ENCODE measurements at regions of chr9 and their contacts with region 1.

Region 1: GRCh38 chr9:19230356-19231125 is at the start of gene DENND4C:
- DNase-seq: peak; percentile 57 to 91 (median 83)
- ATAC-seq: peak; percentile 85
- H3K4me3 ChIP-seq: peak within 1 kb of the TSS; percentile 85 to 96
- H3K4me3 Mint-ChIP-seq: no peak within 1 kb of the TSS
- H3K27ac ChIP-seq: peak within 1 kb of the TSS; percentile 80 to 82
- H3K27ac Mint-ChIP-seq: peak within 1 kb of the TSS; percentile 90
- H3K4me1 ChIP-seq: peaks cover 23% of the 10 kb centered on the region
- H3K4me1 Mint-ChIP-seq: peaks cover 22% of the 10 kb centered on the region
- H3K27me3 ChIP-seq: no peaks in the 10 kb centered on the region
- H3K27me3 Mint-ChIP-seq: no peaks in the 10 kb centered on the region
- CTCF ChIP-seq: no peak
- total RNA-seq, gene DENND4C: 27.4 to 29.8 TPM

Region 2: DNA sequence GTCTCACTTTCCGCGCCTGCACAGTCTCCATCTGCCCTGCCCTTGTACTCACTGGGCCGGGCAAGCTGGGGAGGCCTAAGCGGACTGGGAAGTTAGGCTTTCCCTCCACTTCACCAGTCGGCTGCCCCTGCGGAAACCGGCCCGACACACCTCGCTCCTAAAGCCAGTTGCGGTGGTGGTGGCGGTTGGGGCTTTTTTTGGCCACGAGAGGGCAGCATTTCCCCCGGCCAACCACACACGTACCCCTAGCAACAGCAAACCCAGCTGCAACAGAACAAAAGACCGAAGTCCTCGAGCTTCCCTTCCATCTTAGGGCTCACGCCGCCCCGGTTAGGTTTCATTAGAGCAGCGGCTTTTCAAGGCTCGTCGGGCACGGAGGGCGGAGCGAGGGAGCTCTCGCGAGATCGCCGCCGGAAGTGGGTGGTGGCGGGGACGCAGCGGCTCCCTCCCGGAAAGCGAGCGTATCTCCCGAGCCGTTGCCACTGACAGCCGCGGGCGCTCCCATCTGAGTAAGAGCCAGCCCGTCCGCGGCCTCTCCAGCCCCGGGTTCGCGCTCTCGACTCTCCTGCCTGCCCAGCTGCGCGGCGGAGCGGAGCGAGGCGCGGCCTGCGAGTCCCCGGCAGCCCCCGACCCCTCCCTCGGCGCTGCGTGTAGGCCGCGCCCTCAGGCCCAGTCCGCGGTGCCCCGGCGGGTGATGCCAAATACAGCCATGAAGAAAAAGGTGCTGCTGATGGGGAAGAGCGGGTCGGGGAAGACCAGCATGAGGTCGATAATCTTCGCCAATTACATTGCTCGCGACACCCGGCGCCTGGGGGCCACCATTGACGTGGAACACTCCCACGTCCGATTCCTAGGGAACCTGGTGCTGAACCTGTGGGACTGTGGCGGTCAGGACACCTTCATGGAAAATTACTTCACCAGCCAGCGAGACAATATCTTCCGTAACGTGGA is 181.3 kb before region 1 on chr9 and contains the start of gene RRAGA:
- CTCF ChIA-PET with region 1: interaction called, 6 read pairs
- POLR2A ChIA-PET with region 1: interaction called, 5 read pairs
- intact Hi-C with region 1: loop called (anchors 1 kb)
- DNase-seq: peak; percentile 88 to 97 (median 93)
- ATAC-seq: peak; percentile 88
- H3K4me3 ChIP-seq: peak within 1 kb of the TSS; percentile 69 to 89
- H3K4me3 Mint-ChIP-seq: peak within 1 kb of the TSS; percentile 95
- H3K27ac ChIP-seq: peak within 1 kb of the TSS; percentile 80 to 96
- H3K27ac Mint-ChIP-seq: peak within 1 kb of the TSS; percentile 97
- H3K4me1 ChIP-seq: peaks cover 19% of the 10 kb centered on the region
- H3K4me1 Mint-ChIP-seq: peaks cover 40% of the 10 kb centered on the region
- H3K27me3 ChIP-seq: no peaks in the 10 kb centered on the region
- H3K27me3 Mint-ChIP-seq: no peaks in the 10 kb centered on the region
- CTCF ChIP-seq: peak; percentile 56
- total RNA-seq, gene RRAGA: 36.0 to 38.0 TPM

Region 3: DNA sequence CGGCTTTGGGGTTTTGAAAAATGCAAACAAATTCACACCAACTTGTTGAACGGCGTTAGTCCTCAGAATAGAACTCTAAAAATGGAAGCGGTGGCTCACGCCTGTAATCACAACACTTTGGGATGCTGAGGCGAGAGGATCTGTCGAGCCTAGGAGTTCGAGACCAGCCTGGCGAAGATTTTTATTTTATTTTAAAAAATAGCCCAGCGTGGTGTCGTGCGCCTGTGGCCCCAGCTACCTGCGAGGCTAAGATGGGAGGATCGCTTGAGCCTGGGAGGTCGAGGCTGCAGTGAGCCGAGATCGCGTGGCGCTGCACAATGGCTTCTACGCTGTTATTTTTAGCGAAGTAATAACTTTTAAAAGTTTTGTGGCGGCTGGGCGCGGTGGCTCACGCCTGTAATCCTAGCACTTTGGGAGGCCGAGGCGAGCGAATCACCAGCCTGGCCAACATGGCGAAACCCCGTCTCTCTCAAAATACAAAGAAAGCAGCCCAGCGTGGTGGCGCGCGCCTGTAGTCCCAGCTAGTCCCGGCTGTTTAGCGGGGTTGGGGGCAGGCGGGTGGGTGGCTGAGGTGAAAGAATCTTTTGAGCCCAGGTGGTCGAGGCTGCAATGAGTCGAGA is 102.5 kb before region 1 on chr9:
- CTCF ChIA-PET with region 1: interaction called, 3 read pairs
- POLR2A ChIA-PET with region 1: no interaction called
- intact Hi-C with region 1: loop called in 1 of 2 experiments (anchors 2 kb)
- DNase-seq: peak in 7 of 9 experiments; percentile 7 to 68 (median 46)
- ATAC-seq: peak; percentile 19
- H3K4me3 ChIP-seq: peak overlapping the region; percentile 62 to 70
- H3K4me3 Mint-ChIP-seq: peak overlapping the region; percentile 93
- H3K27ac ChIP-seq: peak overlapping the region; percentile 83 to 91
- H3K27ac Mint-ChIP-seq: peak overlapping the region; percentile 94
- H3K4me1 ChIP-seq: peaks cover 48% of the 10 kb centered on the region
- H3K4me1 Mint-ChIP-seq: peaks cover 53% of the 10 kb centered on the region
- H3K27me3 ChIP-seq: no peaks in the 10 kb centered on the region
- H3K27me3 Mint-ChIP-seq: no peaks in the 10 kb centered on the region
- CTCF ChIP-seq: no peak

Region 4: GRCh38 chr9:19161257-19162025 is 69.1 kb before region 1 on chr9:
- CTCF ChIA-PET with region 1: no interaction called
- POLR2A ChIA-PET with region 1: no interaction called
- intact Hi-C with region 1: no loop called
- DNase-seq: peak in 7 of 9 experiments; percentile 22 to 85 (median 46)
- ATAC-seq: peak; percentile 96
- H3K4me3 ChIP-seq: no peak overlapping the region
- H3K4me3 Mint-ChIP-seq: peak overlapping the region; percentile 40
- H3K27ac ChIP-seq: peak overlapping the region; percentile 29 to 95
- H3K27ac Mint-ChIP-seq: peak overlapping the region; percentile 81
- H3K4me1 ChIP-seq: peaks cover 16% of the 10 kb centered on the region
- H3K4me1 Mint-ChIP-seq: peaks cover 21% of the 10 kb centered on the region
- H3K27me3 ChIP-seq: no peaks in the 10 kb centered on the region
- H3K27me3 Mint-ChIP-seq: no peaks in the 10 kb centered on the region
- CTCF ChIP-seq: no peak

Region 5: GRCh38 chr9:19286634-19287200 is 56.2 kb after region 1 on chr9:
- CTCF ChIA-PET with region 1: no interaction called
- POLR2A ChIA-PET with region 1: no interaction called
- intact Hi-C with region 1: loop called (anchors 2 to 5 kb)
- DNase-seq: no peak
- ATAC-seq: no peak
- H3K4me3 ChIP-seq: no peak overlapping the region
- H3K4me3 Mint-ChIP-seq: no peak overlapping the region
- H3K27ac ChIP-seq: no peak overlapping the region
- H3K27ac Mint-ChIP-seq: no peak overlapping the region
- H3K4me1 ChIP-seq: no peaks in the 10 kb centered on the region
- H3K4me1 Mint-ChIP-seq: peaks cover 34% of the 10 kb centered on the region
- H3K27me3 ChIP-seq: no peaks in the 10 kb centered on the region
- H3K27me3 Mint-ChIP-seq: no peaks in the 10 kb centered on the region
- CTCF ChIP-seq: no peak

Region 6: DNA sequence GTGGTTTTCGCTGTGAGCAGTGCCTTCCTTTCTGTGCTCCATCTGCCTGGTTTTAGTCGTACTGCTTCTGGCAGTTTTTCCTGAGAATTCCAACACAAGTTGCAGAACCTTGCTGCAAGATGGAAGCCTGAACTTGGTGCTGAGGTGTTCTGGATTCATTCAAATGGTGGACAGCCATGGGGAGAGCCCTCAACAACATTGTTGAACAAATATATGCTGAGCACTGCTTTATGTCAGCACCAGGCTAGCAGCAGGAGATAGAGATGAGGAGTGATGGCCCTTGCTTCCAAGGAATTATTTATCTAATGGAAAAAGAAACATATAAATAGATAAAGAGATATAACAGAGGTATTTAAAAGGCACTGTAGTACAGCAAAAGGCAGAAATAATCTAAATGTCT is 156.8 kb after region 1 on chr9:
- CTCF ChIA-PET with region 1: no interaction called
- POLR2A ChIA-PET with region 1: no interaction called
- intact Hi-C with region 1: no loop called
- DNase-seq: no peak
- ATAC-seq: no peak
- H3K4me3 ChIP-seq: no peak overlapping the region
- H3K4me3 Mint-ChIP-seq: no peak overlapping the region
- H3K27ac ChIP-seq: no peak overlapping the region
- H3K27ac Mint-ChIP-seq: no peak overlapping the region
- H3K4me1 ChIP-seq: no peaks in the 10 kb centered on the region
- H3K4me1 Mint-ChIP-seq: no peaks in the 10 kb centered on the region
- H3K27me3 ChIP-seq: no peaks in the 10 kb centered on the region
- H3K27me3 Mint-ChIP-seq: peaks cover 12% of the 10 kb centered on the region
- CTCF ChIP-seq: no peak

Region 7: GRCh38 chr9:19408693-19409400 is 178.3 kb after region 1 on chr9 and contains the start of gene ACER2:
- CTCF ChIA-PET with region 1: no interaction called
- POLR2A ChIA-PET with region 1: no interaction called
- intact Hi-C with region 1: loop called in 1 of 2 experiments (anchors 1 kb)
- DNase-seq: peak; percentile 85 to 99 (median 93)
- ATAC-seq: peak; percentile 97
- H3K4me3 ChIP-seq: peak within 1 kb of the TSS; percentile 86 to 97
- H3K4me3 Mint-ChIP-seq: peak within 1 kb of the TSS; percentile 93
- H3K27ac ChIP-seq: peak within 1 kb of the TSS; percentile 44 to 46
- H3K27ac Mint-ChIP-seq: peak within 1 kb of the TSS; percentile 69
- H3K4me1 ChIP-seq: peaks cover 14% of the 10 kb centered on the region
- H3K4me1 Mint-ChIP-seq: peaks cover 16% of the 10 kb centered on the region
- H3K27me3 ChIP-seq: no peaks in the 10 kb centered on the region
- H3K27me3 Mint-ChIP-seq: no peaks in the 10 kb centered on the region
- CTCF ChIP-seq: no peak
- total RNA-seq, gene ACER2: 0.62 to 1.2 TPM

Measured in CD8-positive, alpha-beta T cell (primary cell).